ENCODE measurements at regions of chr10 and their contacts with region 1.

Region 1: GRCh38 chr10:27235706-27236105 is 4.9 kb downstream of the ACBD5 start:
- DNase-seq: no peak
- ATAC-seq: no peak
- H3K4me3 ChIP-seq: no peak overlapping the region
- H3K27ac ChIP-seq: no peak overlapping the region
- H3K4me1 ChIP-seq: no peaks in the 10 kb centered on the region
- H3K27me3 ChIP-seq: no peaks in the 10 kb centered on the region
- CTCF ChIP-seq: no peak
- EP300 ChIP-seq: no peak
- POLR2A ChIP-seq: no peak
- RAD21 ChIP-seq: no peak

Region 2: GRCh38 chr10:27252267-27253000 is 16.7 kb after region 1 on chr10:
- CTCF ChIA-PET with region 1: interaction called, 17 read pairs
- POLR2A ChIA-PET with region 1: interaction called, 4 read pairs
- RAD21 ChIA-PET with region 1: interaction called, 5 read pairs
- SMC1A ChIA-PET with region 1: interaction called, 3 read pairs
- in situ Hi-C with region 1: no loop called
- intact Hi-C with region 1: no loop called
- DNase-seq: peak; percentile 27
- ATAC-seq: peak; percentile 100
- H3K4me3 ChIP-seq: peak overlapping the region; percentile 69
- H3K27ac ChIP-seq: peak overlapping the region; percentile 63
- H3K4me1 ChIP-seq: peaks cover 3% of the 10 kb centered on the region; the same call in 1 of the 2 replicates
- H3K27me3 ChIP-seq: no peaks in the 10 kb centered on the region
- CTCF ChIP-seq: peak; percentile 19 to 74 (median 46); a peak in 4 of 6 replicates
- EP300 ChIP-seq: no peak
- POLR2A ChIP-seq: peak; percentile 98
- RAD21 ChIP-seq: 0 out of 2 replicates have a peak, but pooled peaks have one; percentile 16